Panc1 (cell line): ENCODE measurements at regions of chr6 and their contacts with region 1.

Region 1: GRCh38 chr6:136635615-136636014 is 85.4 kb upstream of the MAP7 start:
- DNase-seq: no peak
- ATAC-seq: no peak
- H3K4me3 ChIP-seq: no peak overlapping the region
- H3K27ac ChIP-seq: no peak overlapping the region
- H3K4me1 ChIP-seq: no peaks in the 10 kb centered on the region
- H3K27me3 ChIP-seq: no peaks in the 10 kb centered on the region
- CTCF ChIP-seq: no peak

Region 2: GRCh38 chr6:136618086-136618485 is 17.5 kb before region 1 on chr6:
- CTCF ChIA-PET with region 1: interaction called, 4 read pairs
- POLR2A ChIA-PET with region 1: interaction called, 23 read pairs
- in situ Hi-C with region 1: no loop called
- intact Hi-C with region 1: no loop called
- DNase-seq: no peak
- ATAC-seq: no peak
- H3K4me3 ChIP-seq: no peak overlapping the region
- H3K27ac ChIP-seq: no peak overlapping the region
- H3K4me1 ChIP-seq: no peaks in the 10 kb centered on the region
- H3K27me3 ChIP-seq: no peaks in the 10 kb centered on the region
- CTCF ChIP-seq: no peak

Region 3: GRCh38 chr6:137666202-137666774 is 1030.7 kb after region 1 on chr6:
- CTCF ChIA-PET with region 1: no interaction called
- POLR2A ChIA-PET with region 1: interaction called, 21 read pairs
- in situ Hi-C with region 1: no loop called
- intact Hi-C with region 1: no loop called
- DNase-seq: no peak
- ATAC-seq: no peak
- H3K4me3 ChIP-seq: no peak overlapping the region
- H3K27ac ChIP-seq: no peak overlapping the region
- H3K4me1 ChIP-seq: no peaks in the 10 kb centered on the region
- H3K27me3 ChIP-seq: peaks cover 3% of the 10 kb centered on the region; the same call in 1 of the 2 replicates
- CTCF ChIP-seq: no peak